Prostate gland (tissue), 2 donors: ENCODE measurements at regions of chr2 and their contacts with region 1.

Region 1: GRCh38 chr2:217756375-217757107 is 246.3 kb downstream of the TNS1 start:
- DNase-seq: peak; percentile 38
- H3K4me3 ChIP-seq: no peak overlapping the region
- H3K27ac ChIP-seq: no peak overlapping the region
- H3K4me1 ChIP-seq: no peaks in the 10 kb centered on the region
- H3K27me3 ChIP-seq: no peaks in the 10 kb centered on the region
- CTCF ChIP-seq: peak; percentile 58 to 77 (median 69)
- POLR2A ChIP-seq: no peak

Region 2: DNA sequence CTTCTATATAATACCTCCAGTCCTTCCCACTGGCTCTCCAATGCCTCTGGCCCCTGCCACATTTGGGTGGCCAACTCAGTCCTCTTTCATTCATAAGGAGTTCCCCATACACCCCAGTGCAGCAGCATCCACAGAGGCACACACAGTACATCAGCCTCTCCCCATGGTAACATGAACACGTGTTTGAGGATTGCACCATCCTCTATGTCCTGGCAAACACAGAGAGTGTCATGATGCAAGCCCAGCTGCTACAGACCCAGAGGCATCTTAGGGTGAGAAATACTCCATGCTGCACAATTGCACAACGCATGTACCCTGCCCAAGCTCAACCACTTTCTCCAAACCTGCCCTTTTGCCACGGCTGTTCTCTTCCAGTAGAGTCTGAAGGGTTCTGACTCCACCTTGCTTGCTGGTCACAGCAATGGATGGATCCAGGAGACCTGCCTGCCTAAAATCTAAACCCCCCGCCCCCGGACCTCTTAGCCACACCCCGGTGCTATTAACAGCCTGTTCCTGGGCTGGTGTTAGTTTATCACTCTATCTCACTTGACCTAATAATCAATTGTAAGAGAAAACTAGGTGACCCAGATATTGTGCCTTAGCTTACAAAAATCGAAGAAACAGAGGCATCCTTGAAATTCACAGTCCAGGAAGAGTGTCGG is 1072.6 kb before region 1 on chr2:
- intact Hi-C with region 1: loop called (anchors 5 kb)
- DNase-seq: no peak
- H3K4me3 ChIP-seq: no peak overlapping the region
- H3K27ac ChIP-seq: peak overlapping the region in 1 of 2 donors; percentile 19
- H3K4me1 ChIP-seq: peaks cover 3% of the 10 kb centered on the region
- H3K27me3 ChIP-seq: no peaks in the 10 kb centered on the region
- CTCF ChIP-seq: no peak
- POLR2A ChIP-seq: no peak

Region 3: GRCh38 chr2:216799873-216800431 is 956.6 kb before region 1 on chr2:
- intact Hi-C with region 1: no loop called
- DNase-seq: no peak
- H3K4me3 ChIP-seq: no peak overlapping the region
- H3K27ac ChIP-seq: peak overlapping the region in 1 of 2 donors; percentile 26
- H3K4me1 ChIP-seq: no peaks in the 10 kb centered on the region
- H3K27me3 ChIP-seq: no peaks in the 10 kb centered on the region
- CTCF ChIP-seq: no peak
- POLR2A ChIP-seq: no peak

Region 4: DNA sequence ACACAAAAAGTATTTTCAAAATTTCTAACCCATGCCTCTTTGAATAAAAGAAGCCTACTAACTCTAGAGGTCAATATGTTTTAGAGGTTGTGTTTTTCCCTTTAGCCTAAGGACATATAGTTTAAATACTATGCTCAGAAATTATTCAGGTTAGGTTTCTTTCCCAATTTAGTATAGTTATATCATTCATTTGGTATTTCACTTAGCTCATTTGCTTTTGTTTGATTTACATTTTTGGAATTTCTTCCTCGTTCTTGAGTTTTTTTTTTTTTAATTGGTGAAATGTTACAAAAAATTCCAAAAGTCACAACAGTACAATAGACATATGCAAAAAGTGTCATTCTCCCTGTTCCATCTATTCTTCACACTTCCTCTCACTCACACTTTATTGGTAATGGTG is 525.3 kb before region 1 on chr2:
- intact Hi-C with region 1: no loop called
- DNase-seq: no peak
- H3K4me3 ChIP-seq: no peak overlapping the region
- H3K27ac ChIP-seq: no peak overlapping the region
- H3K4me1 ChIP-seq: no peaks in the 10 kb centered on the region
- H3K27me3 ChIP-seq: no peaks in the 10 kb centered on the region
- CTCF ChIP-seq: no peak
- POLR2A ChIP-seq: no peak

Region 5: DNA sequence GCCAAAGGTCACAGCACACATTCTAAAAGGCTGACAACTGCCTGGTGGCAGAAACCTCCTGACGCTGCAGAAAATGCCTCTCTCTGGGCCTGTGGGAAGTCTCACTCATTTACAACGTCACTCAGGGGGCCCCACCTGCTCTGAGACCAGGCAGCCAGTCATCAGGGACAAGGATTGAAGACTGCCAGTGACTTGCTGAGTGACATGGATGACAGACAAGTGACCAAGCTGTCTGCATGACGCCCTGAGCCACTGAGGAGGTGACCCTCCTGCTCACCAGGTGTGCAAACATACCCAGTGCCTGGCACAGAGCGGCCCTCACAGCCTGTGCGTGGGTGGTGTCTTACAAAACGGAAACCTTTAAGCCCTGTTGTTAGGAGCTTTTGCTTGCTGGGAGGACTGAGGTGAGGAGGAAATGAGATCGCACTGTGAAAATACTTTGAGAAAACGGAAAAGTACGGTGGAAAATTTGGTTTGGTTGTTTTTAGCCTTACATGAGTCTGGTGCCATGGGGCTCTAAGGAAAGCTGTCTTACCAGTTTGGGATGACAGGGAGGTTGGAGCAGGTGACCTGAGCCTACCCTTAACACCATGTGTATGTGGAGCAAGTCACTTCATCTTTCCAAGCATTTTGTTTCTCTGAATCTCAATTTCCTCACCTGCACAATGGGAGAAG is 146.0 kb before region 1 on chr2:
- intact Hi-C with region 1: no loop called
- DNase-seq: no peak
- H3K4me3 ChIP-seq: no peak overlapping the region
- H3K27ac ChIP-seq: no peak overlapping the region
- H3K4me1 ChIP-seq: no peaks in the 10 kb centered on the region
- H3K27me3 ChIP-seq: no peaks in the 10 kb centered on the region
- CTCF ChIP-seq: no peak
- POLR2A ChIP-seq: no peak

Region 6: GRCh38 chr2:218033590-218034496 is 277.3 kb after region 1 on chr2:
- intact Hi-C with region 1: no loop called
- DNase-seq: no peak
- H3K4me3 ChIP-seq: peak overlapping the region in 1 of 2 donors; percentile 8
- H3K27ac ChIP-seq: peak overlapping the region; percentile 38 to 59
- H3K4me1 ChIP-seq: no peaks in the 10 kb centered on the region
- H3K27me3 ChIP-seq: no peaks in the 10 kb centered on the region
- CTCF ChIP-seq: no peak
- POLR2A ChIP-seq: peak; percentile 39